Posterior vena cava (tissue), 2 donors: ENCODE measurements at regions of chr1 and their contacts with region 1.

Region 1: DNA sequence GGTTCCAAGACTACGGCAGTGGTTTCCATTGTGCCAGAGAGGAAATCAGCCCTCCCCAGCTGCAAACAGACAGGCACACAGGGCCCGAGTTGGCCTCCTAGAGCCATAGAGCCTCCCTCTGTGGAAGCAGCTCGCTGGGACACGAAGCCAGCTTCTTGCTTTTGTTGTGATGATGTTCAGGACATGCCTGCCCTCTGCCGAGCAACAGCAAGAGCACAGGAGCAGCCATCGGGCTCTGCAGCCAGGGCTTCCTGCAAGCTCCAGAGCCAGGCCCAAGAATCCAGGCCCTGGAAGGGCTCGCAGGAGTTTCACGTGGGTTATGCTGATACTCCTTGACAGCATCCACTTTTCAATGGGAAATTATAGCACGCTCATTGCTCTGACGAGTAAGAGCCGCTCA is 18.5 kb downstream of the NPHP4 start:
- DNase-seq: peak; percentile 74

Region 2: GRCh38 chr1:5950994-5951785 is 22.6 kb before region 1 on chr1:
- intact Hi-C with region 1: loop called in 1 of 2 experiments (anchors 2 kb)
- DNase-seq: no peak

Region 3: DNA sequence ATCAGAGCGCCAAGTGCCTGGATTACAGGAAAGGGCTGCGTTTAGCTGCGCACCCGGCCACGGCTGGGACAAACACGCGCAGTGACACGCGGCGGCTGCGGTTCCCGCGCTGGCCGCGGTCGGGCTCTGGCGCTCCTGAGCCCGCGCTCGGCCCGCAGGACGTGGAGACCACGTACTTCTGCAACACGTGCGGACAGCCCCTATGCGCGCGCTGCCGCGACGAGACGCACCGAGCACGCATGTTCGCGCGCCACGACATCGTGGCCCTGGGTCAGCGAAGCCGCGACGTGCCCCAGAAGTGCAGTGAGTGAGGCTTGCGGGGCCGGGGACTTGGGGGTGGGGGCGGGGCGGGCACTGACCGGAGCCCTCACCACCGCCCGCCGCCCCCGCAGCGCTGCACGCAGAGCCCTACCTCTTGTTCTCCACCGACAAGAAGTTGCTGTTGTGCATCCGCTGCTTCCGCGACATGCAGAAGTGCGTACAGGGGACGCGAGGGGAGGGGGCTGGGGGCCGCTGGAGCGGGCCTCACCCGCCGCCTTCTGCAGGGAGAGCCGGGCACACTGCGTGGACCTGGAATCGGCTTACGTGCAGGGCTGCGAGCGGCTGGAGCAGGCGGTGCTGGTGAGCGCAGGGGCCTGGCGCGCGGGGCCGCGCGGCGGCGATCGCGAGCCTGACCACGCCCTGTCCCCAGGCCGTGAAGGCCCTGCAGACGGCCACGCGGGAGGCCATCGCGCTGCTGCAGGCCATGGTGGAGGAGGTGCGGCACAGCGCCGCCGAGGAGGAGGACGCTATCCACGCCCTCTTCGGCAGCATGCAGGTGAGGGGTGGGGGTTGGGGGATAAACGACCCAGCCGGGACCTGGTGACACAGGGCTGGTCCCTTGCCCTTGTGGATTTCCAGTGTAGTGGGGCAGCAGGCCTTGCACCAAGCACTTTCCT is 235.2 kb after region 1 on chr1:
- intact Hi-C with region 1: no loop called
- DNase-seq: peak; percentile 86